ENCODE measurements at regions of chr3 and their contacts with region 1.

Region 1: GRCh38 chr3:32296256-32297204 is 58.0 kb downstream of the CMTM8 start:
- DNase-seq: peak; percentile 52
- H3K4me3 Mint-ChIP-seq: peak overlapping the region; percentile 43
- H3K27ac Mint-ChIP-seq: peak overlapping the region; percentile 84
- H3K4me1 Mint-ChIP-seq: peaks cover 43% of the 10 kb centered on the region
- H3K27me3 Mint-ChIP-seq: no peaks in the 10 kb centered on the region

Region 2: GRCh38 chr3:32117324-32117723 is 179.2 kb before region 1 on chr3:
- intact Hi-C with region 1: loop called (anchors 5 kb)
- DNase-seq: no peak
- H3K4me3 Mint-ChIP-seq: no peak overlapping the region
- H3K27ac Mint-ChIP-seq: no peak overlapping the region
- H3K4me1 Mint-ChIP-seq: peaks cover 34% of the 10 kb centered on the region
- H3K27me3 Mint-ChIP-seq: no peaks in the 10 kb centered on the region

Region 3: GRCh38 chr3:32238453-32239306 is 57.9 kb before region 1 on chr3 and contains the start of gene CMTM8:
- intact Hi-C with region 1: loop called (anchors 2 kb)
- DNase-seq: peak; percentile 54
- H3K4me3 Mint-ChIP-seq: peak within 1 kb of the TSS; percentile 86
- H3K27ac Mint-ChIP-seq: peak within 1 kb of the TSS; percentile 53
- H3K4me1 Mint-ChIP-seq: peaks cover 25% of the 10 kb centered on the region
- H3K27me3 Mint-ChIP-seq: peaks cover 31% of the 10 kb centered on the region
- total RNA-seq, gene CMTM8: 5.0 and 5.7 TPM in 2 replicates

Region 4: GRCh38 chr3:32334675-32335074 is 38.1 kb after region 1 on chr3:
- intact Hi-C with region 1: loop called (anchors 1 kb)
- DNase-seq: peak; percentile 45
- H3K4me3 Mint-ChIP-seq: no peak overlapping the region
- H3K27ac Mint-ChIP-seq: no peak overlapping the region
- H3K4me1 Mint-ChIP-seq: peaks cover 55% of the 10 kb centered on the region
- H3K27me3 Mint-ChIP-seq: no peaks in the 10 kb centered on the region

Region 5: DNA sequence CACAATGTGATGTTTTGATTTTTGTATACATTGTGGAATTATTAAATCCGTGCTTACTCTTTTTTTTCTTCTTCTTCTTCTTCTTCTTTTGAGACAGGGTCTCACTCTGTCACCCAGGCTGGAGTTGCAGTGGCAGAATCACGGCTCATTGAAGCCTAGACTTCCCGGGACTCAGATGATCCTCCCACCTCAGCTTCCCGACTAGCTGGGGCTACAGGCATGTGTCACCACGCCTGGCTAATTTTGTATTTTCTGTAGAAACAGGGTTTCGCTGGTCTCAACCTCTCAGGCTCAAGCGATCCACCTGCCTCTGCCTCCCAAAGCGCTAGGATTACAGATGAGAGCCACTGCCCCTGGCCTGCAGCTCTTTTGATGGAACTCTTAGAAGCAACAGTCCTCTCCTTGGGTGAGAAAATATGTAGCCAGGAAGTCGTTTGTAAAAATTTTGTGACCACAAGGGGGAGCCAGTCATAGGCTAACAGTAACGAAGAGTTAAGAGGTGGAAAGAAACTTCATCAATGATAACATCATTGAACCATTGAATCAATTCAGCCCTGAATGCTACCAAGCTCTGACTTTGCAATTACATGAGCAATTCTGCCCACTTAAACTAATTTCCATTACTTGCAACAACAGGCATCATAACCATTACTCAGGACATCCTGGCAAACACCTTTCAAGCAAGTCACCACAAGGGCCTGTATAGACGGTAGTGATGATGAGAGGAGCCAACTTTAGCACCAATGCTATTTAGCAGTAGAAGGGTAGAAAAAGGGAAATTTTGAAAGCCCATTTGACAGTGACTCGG is 78.5 kb after region 1 on chr3:
- intact Hi-C with region 1: loop called (anchors 1 kb)
- DNase-seq: peak; percentile 65
- H3K4me3 Mint-ChIP-seq: no peak overlapping the region
- H3K27ac Mint-ChIP-seq: peak overlapping the region; percentile 36
- H3K4me1 Mint-ChIP-seq: peaks cover 24% of the 10 kb centered on the region
- H3K27me3 Mint-ChIP-seq: no peaks in the 10 kb centered on the region

Region 6: DNA sequence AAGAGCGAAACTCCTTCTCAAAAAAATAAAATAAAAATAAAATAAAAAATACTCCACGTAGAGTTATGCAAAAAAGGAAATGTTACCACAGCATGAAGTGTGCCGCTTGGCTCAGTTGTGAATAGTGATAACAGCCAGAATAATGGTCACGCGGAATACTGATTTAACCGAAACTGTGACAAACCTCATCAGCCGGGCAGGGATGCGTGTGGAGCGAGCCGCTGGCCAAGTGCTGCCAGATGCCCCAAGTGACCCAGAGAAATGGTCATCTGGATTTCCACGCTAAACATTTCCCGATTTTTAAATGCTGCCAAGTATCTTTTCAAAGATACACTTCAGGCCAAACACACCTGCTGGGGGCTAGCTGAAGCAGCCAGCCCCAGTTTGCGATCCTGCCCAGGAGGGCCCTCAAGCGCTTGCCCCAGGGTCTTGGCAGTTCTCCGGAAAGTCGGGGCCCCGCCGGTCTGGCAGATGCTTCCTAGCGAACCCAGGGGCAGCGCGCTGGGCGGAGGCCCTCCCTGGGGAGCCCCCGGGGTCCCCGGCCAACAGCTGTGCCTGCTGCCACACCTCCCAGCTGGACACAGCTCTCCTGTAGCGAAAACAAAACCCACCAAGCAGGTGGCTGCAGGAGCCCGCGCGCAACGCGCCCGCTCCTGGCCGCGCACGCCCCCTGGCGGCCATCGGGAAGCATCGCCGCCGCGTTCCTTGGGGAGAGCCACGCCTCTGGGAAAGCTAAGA is 171.0 kb after region 1 on chr3:
- intact Hi-C with region 1: loop called (anchors 1 kb)
- DNase-seq: peak; percentile 68
- H3K4me3 Mint-ChIP-seq: no peak overlapping the region
- H3K27ac Mint-ChIP-seq: no peak overlapping the region
- H3K4me1 Mint-ChIP-seq: peaks cover 54% of the 10 kb centered on the region
- H3K27me3 Mint-ChIP-seq: no peaks in the 10 kb centered on the region

Region 7: DNA sequence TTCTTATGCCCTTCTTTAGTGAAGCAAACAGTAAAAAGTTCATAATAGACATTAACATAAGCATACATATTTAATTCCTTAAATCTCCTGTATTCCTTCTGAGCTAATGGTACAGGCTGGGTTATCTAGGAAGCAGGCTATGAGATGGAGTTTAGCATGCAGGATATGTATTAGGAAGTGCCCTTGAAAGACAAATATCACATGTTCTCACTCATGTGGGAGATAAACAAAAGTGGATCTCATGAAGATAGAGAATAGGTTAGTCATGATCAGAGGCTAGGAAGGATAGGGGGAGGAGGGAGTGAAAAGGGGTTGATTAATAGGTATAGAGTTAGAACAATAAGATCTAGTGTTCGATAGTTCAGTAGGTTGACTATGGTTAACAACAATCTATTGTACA is 1316.1 kb after region 1 on chr3:
- intact Hi-C with region 1: no loop called
- DNase-seq: no peak
- H3K4me3 Mint-ChIP-seq: no peak overlapping the region
- H3K27ac Mint-ChIP-seq: no peak overlapping the region
- H3K4me1 Mint-ChIP-seq: no peaks in the 10 kb centered on the region
- H3K27me3 Mint-ChIP-seq: no peaks in the 10 kb centered on the region